Lower lobe of right lung (tissue), 2 donors: ENCODE measurements at regions of chr2 and their contacts with region 1.

Region 1: GRCh38 chr2:157876066-157876787 is at the start of gene ACVR1:
- DNase-seq: peak; percentile 97
- ATAC-seq: peak; percentile 96 to 97
- H3K4me3 ChIP-seq: peak within 1 kb of the TSS; percentile 83
- H3K27ac ChIP-seq: peak within 1 kb of the TSS; percentile 95
- H3K4me1 ChIP-seq: peaks cover 38% of the 10 kb centered on the region
- H3K27me3 ChIP-seq: no peaks in the 10 kb centered on the region
- CTCF ChIP-seq: peak; percentile 26
- total RNA-seq, gene ACVR1: 35.0 TPM

Region 2: DNA sequence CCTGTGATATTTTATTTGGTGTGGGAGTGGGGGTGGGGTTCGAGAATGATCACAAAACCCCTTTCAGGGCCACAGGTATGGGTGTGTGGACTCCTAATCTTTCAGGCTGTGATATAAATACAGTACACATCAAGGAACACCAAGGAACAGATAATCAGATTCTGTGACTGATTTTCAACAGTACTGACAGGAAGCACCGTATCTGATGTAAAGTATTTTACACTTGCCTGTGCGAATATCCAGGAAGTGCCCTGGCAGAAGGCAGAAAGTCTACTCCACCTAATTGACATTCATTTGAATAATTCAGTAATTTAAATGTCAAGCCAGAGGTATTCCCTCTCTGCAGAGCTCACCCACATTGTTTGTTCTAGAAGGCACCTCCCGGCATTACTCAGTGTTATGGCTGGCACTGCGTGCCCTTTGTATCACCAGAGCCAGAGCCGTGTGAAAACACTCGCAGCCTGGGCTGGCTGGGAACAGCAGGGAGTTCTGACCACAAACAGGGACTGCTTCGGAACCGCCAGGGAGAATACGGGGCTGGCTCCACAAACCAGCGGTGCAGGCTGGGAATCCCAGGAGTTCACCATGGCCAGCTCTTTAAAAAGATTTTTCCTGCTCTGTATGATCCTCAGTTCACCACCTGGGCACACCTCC is 91.9 kb before region 1 on chr2:
- intact Hi-C with region 1: loop called (anchors 10 kb)
- DNase-seq: peak; percentile 57
- ATAC-seq: peak; percentile 70 to 87
- H3K4me3 ChIP-seq: no peak overlapping the region
- H3K27ac ChIP-seq: peak overlapping the region; percentile 12
- H3K4me1 ChIP-seq: peaks cover 56% of the 10 kb centered on the region
- H3K27me3 ChIP-seq: no peaks in the 10 kb centered on the region
- CTCF ChIP-seq: no peak